Heart right ventricle (tissue), 16 donors: ENCODE measurements at regions of chr16 and their contacts with region 1.

Region 1: GRCh38 chr16:3317315-3317999 is 12.2 kb downstream of the ZNF75A start:
- DNase-seq: no peak
- ATAC-seq: no peak
- H3K4me3 ChIP-seq: no peak overlapping the region
- H3K27ac ChIP-seq: no peak overlapping the region
- H3K4me1 ChIP-seq: no peaks in the 10 kb centered on the region
- H3K27me3 ChIP-seq: no peaks in the 10 kb centered on the region
- CTCF ChIP-seq: no peak

Region 2: GRCh38 chr16:3223913-3224515 is 93.4 kb before region 1 on chr16:
- intact Hi-C with region 1: loop called in 2 of 10 experiments (anchors 10 kb)
- DNase-seq: no peak
- ATAC-seq: no peak
- H3K4me3 ChIP-seq: no peak overlapping the region
- H3K27ac ChIP-seq: no peak overlapping the region
- H3K4me1 ChIP-seq: no peaks in the 10 kb centered on the region
- H3K27me3 ChIP-seq: no peaks in the 10 kb centered on the region
- CTCF ChIP-seq: no peak

Region 3: GRCh38 chr16:3377917-3378316 is 60.5 kb after region 1 on chr16:
- intact Hi-C with region 1: loop called in 1 of 10 experiments (anchors 10 kb)
- DNase-seq: no peak
- ATAC-seq: no peak
- H3K4me3 ChIP-seq: no peak overlapping the region
- H3K27ac ChIP-seq: no peak overlapping the region
- H3K4me1 ChIP-seq: no peaks in the 10 kb centered on the region
- H3K27me3 ChIP-seq: no peaks in the 10 kb centered on the region
- CTCF ChIP-seq: no peak

Region 4: GRCh38 chr16:3389663-3390338 is 72.3 kb after region 1 on chr16:
- intact Hi-C with region 1: loop called in 1 of 10 experiments (anchors 5 kb)
- DNase-seq: no peak
- ATAC-seq: peak in 1 of 8 donors; percentile 51
- H3K4me3 ChIP-seq: no peak overlapping the region
- H3K27ac ChIP-seq: no peak overlapping the region
- H3K4me1 ChIP-seq: no peaks in the 10 kb centered on the region
- H3K27me3 ChIP-seq: no peaks in the 10 kb centered on the region
- CTCF ChIP-seq: no peak

Region 5: DNA sequence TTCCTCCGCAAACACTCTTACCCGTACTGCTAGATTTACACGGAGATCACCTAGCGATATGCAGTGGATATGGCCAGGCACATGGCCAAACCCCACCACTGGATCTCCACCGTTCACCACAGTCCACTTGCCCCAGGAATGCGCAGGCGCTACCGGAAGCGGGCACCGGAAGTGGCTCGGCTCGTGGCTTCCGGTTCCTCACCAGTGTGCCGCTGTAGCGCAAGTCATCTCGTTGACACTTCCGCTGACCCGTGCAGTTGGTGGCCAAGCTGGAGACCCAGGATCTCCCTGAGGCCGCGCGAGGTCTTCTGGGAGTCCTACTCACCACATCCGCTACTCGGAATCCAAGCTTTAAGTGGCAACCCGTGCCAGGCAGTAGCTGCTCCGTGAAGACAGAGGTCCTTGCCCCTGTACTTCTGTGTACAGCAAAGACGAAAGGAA is 114.3 kb after region 1 on chr16:
- intact Hi-C with region 1: loop called in 1 of 10 experiments (anchors 10 kb)
- DNase-seq: peak; percentile 22 to 61
- ATAC-seq: peak; percentile 67 to 96 (median 77)
- H3K4me3 ChIP-seq: peak overlapping the region in 8 of 10 donors; percentile 12 to 40 (median 31)
- H3K27ac ChIP-seq: peak overlapping the region in 1 of 10 donors; percentile 42
- H3K4me1 ChIP-seq: no peaks in the 10 kb centered on the region
- H3K27me3 ChIP-seq: peaks cover 0 to 3% (median 0%) of the 10 kb centered on the region in 7 donors
- CTCF ChIP-seq: no peak